ENCODE measurements at regions of chr1 and their contacts with region 1.

Region 1: GRCh38 chr1:166489670-166490436 is 323.1 kb upstream of the FAM78B start:
- DNase-seq: peak; percentile 58
- H3K4me3 Mint-ChIP-seq: no peak overlapping the region
- H3K27ac Mint-ChIP-seq: no peak overlapping the region
- H3K4me1 Mint-ChIP-seq: peaks cover 8% of the 10 kb centered on the region
- H3K27me3 Mint-ChIP-seq: peaks cover 1% of the 10 kb centered on the region

Region 2: DNA sequence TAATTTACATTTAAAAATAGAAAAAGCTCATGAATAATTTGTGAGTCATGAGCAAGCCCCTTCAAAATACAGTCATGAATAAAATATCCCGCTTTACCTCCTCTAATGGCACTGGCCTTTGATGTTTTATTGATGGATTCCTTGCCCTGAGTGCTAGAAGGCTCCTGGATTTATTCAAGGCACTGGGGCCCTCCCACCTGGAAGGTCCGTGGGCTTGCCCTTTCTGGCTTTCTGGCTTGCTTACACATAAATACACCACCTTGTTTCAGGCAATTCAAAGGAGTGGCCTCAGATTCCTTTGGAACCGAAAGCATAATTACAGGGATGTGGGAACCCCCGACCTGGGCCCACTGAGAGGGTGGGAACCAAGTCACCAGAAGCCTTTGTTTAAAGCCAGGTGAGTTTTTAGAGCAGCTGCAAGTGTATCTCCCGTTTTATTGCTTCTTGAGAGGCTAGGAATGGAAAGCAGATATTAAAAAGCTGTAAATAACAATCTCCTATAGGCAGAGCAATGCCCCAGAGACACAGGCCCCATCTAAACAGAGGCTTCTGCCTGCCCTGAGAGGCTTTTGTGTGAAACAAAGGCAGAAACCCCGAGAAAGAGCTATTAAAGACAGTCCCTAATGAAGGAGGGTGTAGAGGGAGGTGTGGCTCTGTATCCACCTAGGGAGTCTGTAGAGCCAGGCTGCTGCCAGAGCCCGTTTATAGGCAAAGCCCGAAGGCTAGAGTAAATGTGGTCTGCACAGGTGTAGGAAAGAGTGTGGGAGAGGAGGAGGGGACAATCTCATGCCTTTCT is 449.5 kb before region 1 on chr1:
- CTCF ChIA-PET with region 1: no interaction called
- POLR2A ChIA-PET with region 1: no interaction called
- intact Hi-C with region 1: no loop called
- DNase-seq: no peak
- H3K4me3 Mint-ChIP-seq: no peak overlapping the region
- H3K27ac Mint-ChIP-seq: no peak overlapping the region
- H3K4me1 Mint-ChIP-seq: no peaks in the 10 kb centered on the region
- H3K27me3 Mint-ChIP-seq: peaks cover 8% of the 10 kb centered on the region

Region 3: DNA sequence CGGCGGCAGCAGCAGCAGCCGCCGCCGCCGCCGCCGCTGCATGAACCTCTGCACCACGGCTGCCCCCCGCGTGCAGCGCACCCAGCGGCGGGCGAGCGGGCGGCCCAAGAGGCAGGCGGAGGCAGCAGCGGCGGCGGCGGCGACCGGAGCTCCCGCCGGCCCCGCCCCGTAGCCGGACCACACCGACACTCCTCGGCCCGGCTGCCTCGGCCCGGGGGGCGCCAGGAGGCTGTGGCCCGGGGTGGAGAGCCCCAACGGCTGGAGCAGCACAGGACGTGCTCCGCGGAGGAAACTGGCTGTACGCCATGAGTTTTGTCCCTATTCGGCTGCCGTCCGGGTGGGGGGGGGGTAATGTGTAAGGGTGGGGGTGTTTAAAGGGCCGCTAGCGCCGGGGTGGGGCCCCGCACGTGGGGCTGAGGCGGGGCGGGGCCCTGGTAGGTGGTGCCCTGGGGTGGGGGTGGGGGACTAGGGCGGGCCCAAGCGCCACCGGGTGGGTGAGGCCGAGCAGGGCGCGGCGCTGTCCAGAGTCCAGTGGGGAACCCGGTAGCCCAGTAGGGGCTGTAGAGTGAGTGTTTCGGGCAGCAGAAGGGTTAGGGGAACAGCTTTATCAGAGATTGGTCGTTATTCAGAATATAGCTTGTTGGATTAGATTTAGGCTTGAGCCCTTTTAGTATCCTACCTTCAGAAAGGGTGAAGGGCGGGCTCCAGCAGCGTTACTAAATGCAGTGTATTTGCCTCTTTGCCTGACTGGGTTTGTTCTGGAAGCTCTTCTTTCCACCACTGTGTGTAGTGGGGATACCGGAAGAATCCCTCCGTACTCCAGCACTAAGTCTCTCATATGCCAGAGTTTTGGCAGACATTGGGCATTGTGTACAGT is 322.9 kb before region 1 on chr1 and contains the start of gene FAM78B:
- CTCF ChIA-PET with region 1: no interaction called
- POLR2A ChIA-PET with region 1: no interaction called
- intact Hi-C with region 1: loop called (anchors 5 kb)
- DNase-seq: peak; percentile 72
- H3K4me3 Mint-ChIP-seq: peak within 1 kb of the TSS; percentile 67
- H3K27ac Mint-ChIP-seq: no peak within 1 kb of the TSS
- H3K4me1 Mint-ChIP-seq: peaks cover 23% of the 10 kb centered on the region
- H3K27me3 Mint-ChIP-seq: peaks cover 33% of the 10 kb centered on the region
- total RNA-seq, gene FAM78B: 0.24 to 0.27 TPM

Region 4: GRCh38 chr1:166479052-166479631 is 10.7 kb before region 1 on chr1:
- CTCF ChIA-PET with region 1: interaction called, 41 read pairs
- POLR2A ChIA-PET with region 1: no interaction called
- intact Hi-C with region 1: no loop called
- DNase-seq: peak; percentile 68
- H3K4me3 Mint-ChIP-seq: no peak overlapping the region
- H3K27ac Mint-ChIP-seq: no peak overlapping the region
- H3K4me1 Mint-ChIP-seq: no peaks in the 10 kb centered on the region
- H3K27me3 Mint-ChIP-seq: no peaks in the 10 kb centered on the region

Region 5: DNA sequence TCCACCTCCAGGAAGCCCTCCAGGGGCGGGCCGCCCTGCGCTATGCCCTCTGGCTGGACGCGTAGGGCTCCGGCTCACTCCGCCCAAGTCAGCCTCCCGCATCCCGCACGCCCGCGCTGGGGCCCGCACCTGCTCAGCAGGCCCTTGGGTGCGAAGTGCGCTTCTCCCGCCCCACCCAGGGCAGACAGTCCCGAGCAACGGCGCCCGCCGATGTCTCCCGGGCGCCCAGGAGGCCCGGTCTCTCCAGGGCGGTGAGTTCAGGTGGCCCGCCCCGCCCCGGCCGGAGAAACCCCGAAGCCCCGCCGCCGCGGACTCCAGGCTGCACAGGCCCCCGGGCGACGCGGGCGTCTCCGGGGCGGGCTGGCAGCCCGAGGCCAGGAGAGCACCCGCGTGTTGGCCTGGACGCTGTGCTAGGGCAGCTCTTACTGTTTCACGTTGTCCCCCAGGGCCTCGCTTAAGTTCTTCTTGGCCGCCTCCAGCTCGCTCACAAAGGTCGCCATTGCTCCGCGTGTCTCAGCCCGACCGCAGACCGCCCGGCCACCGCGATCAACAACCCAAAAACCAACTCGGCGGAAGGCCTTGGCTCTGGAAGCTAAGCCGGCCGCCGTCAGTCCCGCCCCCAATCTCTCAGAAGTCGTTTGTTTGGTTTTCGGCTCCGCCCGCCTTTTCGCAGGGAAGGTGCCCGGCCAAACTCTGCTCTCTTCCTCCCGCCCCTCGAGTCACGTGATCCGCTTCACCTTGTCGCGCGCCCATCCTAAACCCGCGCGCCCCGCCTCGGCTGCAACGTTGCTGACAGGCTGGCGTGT is 386.1 kb after region 1 on chr1 and contains the start of gene TADA1:
- CTCF ChIA-PET with region 1: no interaction called
- POLR2A ChIA-PET with region 1: no interaction called
- intact Hi-C with region 1: loop called (anchors 10 kb)
- DNase-seq: peak; percentile 100
- H3K4me3 Mint-ChIP-seq: peak within 1 kb of the TSS; percentile 96
- H3K27ac Mint-ChIP-seq: peak within 1 kb of the TSS; percentile 97
- H3K4me1 Mint-ChIP-seq: peaks cover 47% of the 10 kb centered on the region
- H3K27me3 Mint-ChIP-seq: no peaks in the 10 kb centered on the region
- total RNA-seq, gene TADA1: 16.9 to 18.3 TPM

Measured in activated CD4-positive, alpha-beta memory T cell treated with anti-CD3 and anti-CD28 coated beads for 36 hours (primary cell).